HepG2 (cell line): ENCODE measurements at regions of chr11 and their contacts with region 1.

Region 1: GRCh38 chr11:34366522-34366921 is 8.7 kb upstream of the ABTB2 start:
- DNase-seq: peak; percentile 57
- ATAC-seq: no peak
- H3K4me3 ChIP-seq: no peak overlapping the region
- H3K27ac ChIP-seq: no peak overlapping the region
- H3K4me1 ChIP-seq: peaks cover 56% of the 10 kb centered on the region
- H3K27me3 ChIP-seq: no peaks in the 10 kb centered on the region
- CTCF ChIP-seq: peak; percentile 60
- EP300 ChIP-seq: no peak
- POLR2A ChIP-seq: no peak
- RAD21 ChIP-seq: 0 out of 2 replicates have a peak, but pooled peaks have one; percentile 21

Region 2: GRCh38 chr11:33996498-33997454 is 369.7 kb before region 1 on chr11:
- CTCF ChIA-PET with region 1: no interaction called
- POLR2A ChIA-PET with region 1: no interaction called
- in situ Hi-C with region 1: loop called (anchors 5 kb)
- intact Hi-C with region 1: no loop called
- DNase-seq: peak; percentile 62
- ATAC-seq: peak; percentile 98
- H3K4me3 ChIP-seq: peak overlapping the region in 2 of 3 experiments; percentile 6 to 66; a peak in 4 of 6 replicates
- H3K27ac ChIP-seq: no peak overlapping the region
- H3K4me1 ChIP-seq: peaks cover 18% of the 10 kb centered on the region
- H3K27me3 ChIP-seq: peaks cover 0 to 12% of the 10 kb centered on the region in 2 experiments; a peak in 2 of 5 replicates
- CTCF ChIP-seq: peak; percentile 91
- EP300 ChIP-seq: no peak
- POLR2A ChIP-seq: no peak
- RAD21 ChIP-seq: peak; percentile 60; the same call in 1 of the 2 replicates

Region 3: DNA sequence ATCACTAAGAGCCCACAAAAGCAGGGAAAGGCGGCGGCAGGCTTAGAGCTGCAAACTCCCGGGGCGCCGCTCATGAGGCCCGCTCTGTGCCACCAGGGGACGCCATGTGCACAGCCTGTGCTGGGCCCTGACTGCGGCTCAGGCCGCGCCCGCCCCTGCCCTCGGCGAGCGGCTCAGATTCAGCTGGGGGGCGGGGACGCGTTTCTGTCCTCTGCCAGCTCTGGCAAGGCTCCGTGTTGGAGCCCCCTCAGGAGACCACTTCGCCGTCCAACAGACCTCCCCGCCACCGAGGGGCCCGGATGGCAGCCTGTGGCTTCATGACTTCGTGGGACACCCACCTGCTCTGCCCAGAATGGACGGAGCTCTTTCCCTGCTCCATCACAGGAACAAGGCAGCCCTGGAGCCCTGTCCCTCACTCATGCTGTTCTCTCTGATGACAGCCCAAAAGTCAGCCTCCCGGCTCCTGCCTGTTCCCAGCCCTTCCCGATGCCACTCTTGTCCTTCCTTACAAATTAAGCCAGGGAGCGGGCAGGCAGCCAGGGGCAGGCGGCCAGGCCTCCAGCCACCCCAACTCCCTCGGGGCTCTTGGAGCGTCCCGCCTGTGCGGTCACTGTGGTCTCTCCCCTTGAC is 192.0 kb before region 1 on chr11:
- CTCF ChIA-PET with region 1: interaction called, 3 read pairs
- POLR2A ChIA-PET with region 1: no interaction called
- in situ Hi-C with region 1: no loop called
- intact Hi-C with region 1: loop called (anchors 1 kb)
- DNase-seq: peak; percentile 43
- ATAC-seq: peak; percentile 99
- H3K4me3 ChIP-seq: peak overlapping the region in 1 of 3 experiments; percentile 41; a peak in 1 of 6 replicates
- H3K27ac ChIP-seq: no peak overlapping the region
- H3K4me1 ChIP-seq: peaks cover 7% of the 10 kb centered on the region; the same call in 1 of the 2 replicates
- H3K27me3 ChIP-seq: no peaks in the 10 kb centered on the region
- CTCF ChIP-seq: peak; percentile 99
- EP300 ChIP-seq: 0 out of 4 replicates have a peak, but pooled peaks of 1 of the 2 experiments have one; percentile 19
- POLR2A ChIP-seq: no peak
- RAD21 ChIP-seq: peak; percentile 100

Region 4: GRCh38 chr11:34302046-34302921 is 64.2 kb before region 1 on chr11:
- CTCF ChIA-PET with region 1: no interaction called
- POLR2A ChIA-PET with region 1: no interaction called
- in situ Hi-C with region 1: no loop called
- intact Hi-C with region 1: no loop called
- DNase-seq: no peak
- ATAC-seq: no peak
- H3K4me3 ChIP-seq: no peak overlapping the region
- H3K27ac ChIP-seq: no peak overlapping the region
- H3K4me1 ChIP-seq: 0 out of 2 replicates have a peak, but pooled peaks cover 8% of the 10 kb centered on the region
- H3K27me3 ChIP-seq: no peaks in the 10 kb centered on the region
- CTCF ChIP-seq: no peak
- EP300 ChIP-seq: no peak
- POLR2A ChIP-seq: no peak
- RAD21 ChIP-seq: no peak

Region 5: GRCh38 chr11:34438529-34439507 is 72.3 kb after region 1 on chr11 and contains the start of gene CAT:
- CTCF ChIA-PET with region 1: no interaction called
- POLR2A ChIA-PET with region 1: interaction called, 6 read pairs
- in situ Hi-C with region 1: no loop called
- intact Hi-C with region 1: loop called (anchors 2 kb)
- DNase-seq: peak; percentile 92
- ATAC-seq: peak; percentile 95
- H3K4me3 ChIP-seq: peak within 1 kb of the TSS; percentile 64 to 88 (median 84)
- H3K27ac ChIP-seq: peak within 1 kb of the TSS; percentile 92
- H3K4me1 ChIP-seq: peaks cover 58% of the 10 kb centered on the region
- H3K27me3 ChIP-seq: no peaks in the 10 kb centered on the region; a peak in 1 of 5 replicates
- CTCF ChIP-seq: 0 out of 2 replicates have a peak, but pooled peaks have one; percentile 9
- EP300 ChIP-seq: peak in 1 of 2 experiments; percentile 21; a peak in 1 of 4 replicates
- POLR2A ChIP-seq: peak; percentile 83 to 95
- RAD21 ChIP-seq: no peak
- total RNA-seq, gene CAT: 136 and 180 TPM in 2 replicates

Region 6: DNA sequence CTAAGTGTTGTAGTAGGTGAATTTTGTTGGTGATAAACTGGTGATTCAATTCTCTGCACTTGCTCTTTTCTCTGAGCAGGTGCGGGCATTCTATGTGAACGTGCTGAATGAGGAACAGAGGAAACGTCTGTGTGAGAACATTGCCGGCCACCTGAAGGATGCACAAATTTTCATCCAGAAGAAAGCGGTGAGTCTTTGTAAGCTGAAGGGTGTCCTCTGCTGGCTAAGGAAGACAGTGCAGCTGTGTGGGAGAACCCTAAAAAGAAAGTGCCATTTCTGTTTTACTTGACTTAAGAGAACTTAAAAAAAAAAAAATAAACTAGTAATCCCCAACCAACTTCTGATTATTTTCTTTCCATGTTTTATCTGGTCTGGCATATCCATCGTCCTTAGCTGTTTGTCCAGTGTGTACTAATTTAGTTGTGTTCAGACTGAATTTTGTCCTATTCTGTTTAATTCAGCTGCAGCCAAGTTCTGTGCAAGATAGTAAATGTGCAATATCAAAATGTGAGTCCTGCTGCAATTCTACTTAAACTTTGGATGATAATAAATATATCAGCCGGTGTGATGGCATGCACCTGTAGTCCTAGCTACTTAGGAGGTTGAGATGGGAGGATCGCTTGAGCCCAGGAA is 101.8 kb after region 1 on chr11:
- CTCF ChIA-PET with region 1: interaction called, 24 read pairs
- POLR2A ChIA-PET with region 1: interaction called, 6 read pairs
- in situ Hi-C with region 1: loop called (anchors 5 kb)
- intact Hi-C with region 1: loop called (anchors 1 kb)
- DNase-seq: peak; percentile 30
- ATAC-seq: peak; percentile 54
- H3K4me3 ChIP-seq: no peak overlapping the region
- H3K27ac ChIP-seq: no peak overlapping the region
- H3K4me1 ChIP-seq: peaks cover 16% of the 10 kb centered on the region
- H3K27me3 ChIP-seq: no peaks in the 10 kb centered on the region
- CTCF ChIP-seq: peak; percentile 72
- EP300 ChIP-seq: no peak
- POLR2A ChIP-seq: no peak
- RAD21 ChIP-seq: peak; percentile 72

Region 7: GRCh38 chr11:34492806-34493414 is 126.4 kb after region 1 on chr11:
- CTCF ChIA-PET with region 1: no interaction called
- POLR2A ChIA-PET with region 1: interaction called, 6 read pairs
- in situ Hi-C with region 1: loop called (anchors 5 kb)
- intact Hi-C with region 1: loop called (anchors 1 kb)
- DNase-seq: peak; percentile 68
- ATAC-seq: peak; percentile 49
- H3K4me3 ChIP-seq: no peak overlapping the region
- H3K27ac ChIP-seq: no peak overlapping the region
- H3K4me1 ChIP-seq: peaks cover 43% of the 10 kb centered on the region
- H3K27me3 ChIP-seq: no peaks in the 10 kb centered on the region
- CTCF ChIP-seq: peak; percentile 80
- EP300 ChIP-seq: no peak
- POLR2A ChIP-seq: no peak
- RAD21 ChIP-seq: peak; percentile 58; the same call in 1 of the 2 replicates

Region 8: DNA sequence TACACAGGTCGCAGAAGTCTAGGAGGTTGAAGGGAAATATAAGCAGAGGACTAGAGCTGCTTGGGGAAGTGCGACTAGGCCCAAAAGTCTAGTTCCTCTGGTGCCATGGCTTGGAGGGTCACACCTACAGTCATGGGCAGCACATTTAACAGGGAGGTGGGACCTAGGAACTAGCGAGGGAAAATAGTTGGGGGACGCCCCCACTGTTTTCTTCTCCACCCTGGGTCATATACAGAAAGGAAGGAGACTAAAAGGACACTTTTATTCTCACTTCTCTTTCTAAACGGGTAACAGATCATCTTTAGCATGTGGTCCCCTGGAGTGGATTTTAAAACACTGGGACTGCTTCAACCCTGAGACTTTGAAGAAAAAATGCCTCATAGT is 533.1 kb after region 1 on chr11:
- CTCF ChIA-PET with region 1: no interaction called
- POLR2A ChIA-PET with region 1: no interaction called
- in situ Hi-C with region 1: loop called (anchors 10 kb)
- intact Hi-C with region 1: loop called (anchors 2 kb)
- DNase-seq: no peak
- ATAC-seq: no peak
- H3K4me3 ChIP-seq: no peak overlapping the region
- H3K27ac ChIP-seq: no peak overlapping the region
- H3K4me1 ChIP-seq: peaks cover 9% of the 10 kb centered on the region
- H3K27me3 ChIP-seq: no peaks in the 10 kb centered on the region
- CTCF ChIP-seq: no peak
- EP300 ChIP-seq: no peak
- POLR2A ChIP-seq: no peak
- RAD21 ChIP-seq: no peak